PC-9 (cell line): ENCODE measurements at regions of chr2 and their contacts with region 1.

Region 1: DNA sequence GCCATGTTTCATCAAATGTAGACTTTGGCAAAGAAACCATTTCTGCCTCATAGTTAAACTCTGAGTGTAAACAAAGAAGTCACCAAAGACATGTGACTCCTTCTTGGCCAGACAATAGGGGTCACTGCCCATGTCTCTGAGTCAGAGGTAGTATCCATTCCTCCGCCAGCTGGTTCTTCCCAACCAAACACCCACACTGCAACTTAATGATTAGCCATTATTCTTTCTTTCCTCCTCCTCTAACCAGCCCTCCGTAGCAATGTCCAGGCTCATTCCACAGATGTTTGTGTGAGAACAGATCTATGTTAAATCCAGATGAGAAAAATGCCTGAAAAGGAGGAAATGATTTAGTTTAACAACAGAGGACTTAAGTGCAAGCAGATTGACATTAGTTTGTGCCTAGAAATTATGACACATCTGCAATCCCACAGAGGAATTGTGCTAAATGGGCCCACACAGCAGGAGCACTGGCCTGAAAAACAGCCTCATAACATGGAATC is 127.9 kb upstream of the SH3BP4 start:
- DNase-seq: peak; percentile 77 to 92
- H3K4me3 ChIP-seq: no peak overlapping the region
- H3K27ac ChIP-seq: peak overlapping the region; percentile 46; the same call in 1 of the 2 replicates
- H3K4me1 ChIP-seq: peaks cover 54% of the 10 kb centered on the region
- H3K27me3 ChIP-seq: no peaks in the 10 kb centered on the region
- CTCF ChIP-seq: no peak

Region 2: GRCh38 chr2:234550511-234551107 is 273.3 kb before region 1 on chr2:
- CTCF ChIA-PET with region 1: interaction called, 3 read pairs
- POLR2A ChIA-PET with region 1: no interaction called
- intact Hi-C with region 1: loop called (anchors 1 kb)
- DNase-seq: peak; percentile 74 to 85
- H3K4me3 ChIP-seq: no peak overlapping the region
- H3K27ac ChIP-seq: no peak overlapping the region
- H3K4me1 ChIP-seq: peaks cover 11% of the 10 kb centered on the region
- H3K27me3 ChIP-seq: no peaks in the 10 kb centered on the region
- CTCF ChIP-seq: peak; percentile 99

Region 3: GRCh38 chr2:234679741-234680687 is 143.9 kb before region 1 on chr2:
- CTCF ChIA-PET with region 1: no interaction called
- POLR2A ChIA-PET with region 1: interaction called, 5 read pairs
- intact Hi-C with region 1: loop called (anchors 5 kb)
- DNase-seq: peak; percentile 86 to 96
- H3K4me3 ChIP-seq: no peak overlapping the region
- H3K27ac ChIP-seq: peak overlapping the region; percentile 90
- H3K4me1 ChIP-seq: peaks cover 75% of the 10 kb centered on the region
- H3K27me3 ChIP-seq: no peaks in the 10 kb centered on the region
- CTCF ChIP-seq: no peak

Region 4: GRCh38 chr2:234725528-234726264 is 98.2 kb before region 1 on chr2:
- CTCF ChIA-PET with region 1: no interaction called
- POLR2A ChIA-PET with region 1: no interaction called
- intact Hi-C with region 1: no loop called
- DNase-seq: no peak
- H3K4me3 ChIP-seq: no peak overlapping the region
- H3K27ac ChIP-seq: peak overlapping the region; percentile 28
- H3K4me1 ChIP-seq: peaks cover 20% of the 10 kb centered on the region
- H3K27me3 ChIP-seq: no peaks in the 10 kb centered on the region
- CTCF ChIP-seq: no peak

Region 5: GRCh38 chr2:234792621-234793022 is 31.3 kb before region 1 on chr2:
- CTCF ChIA-PET with region 1: no interaction called
- POLR2A ChIA-PET with region 1: no interaction called
- intact Hi-C with region 1: no loop called
- DNase-seq: no peak
- H3K4me3 ChIP-seq: no peak overlapping the region
- H3K27ac ChIP-seq: no peak overlapping the region
- H3K4me1 ChIP-seq: no peaks in the 10 kb centered on the region
- H3K27me3 ChIP-seq: no peaks in the 10 kb centered on the region
- CTCF ChIP-seq: no peak

Region 6: DNA sequence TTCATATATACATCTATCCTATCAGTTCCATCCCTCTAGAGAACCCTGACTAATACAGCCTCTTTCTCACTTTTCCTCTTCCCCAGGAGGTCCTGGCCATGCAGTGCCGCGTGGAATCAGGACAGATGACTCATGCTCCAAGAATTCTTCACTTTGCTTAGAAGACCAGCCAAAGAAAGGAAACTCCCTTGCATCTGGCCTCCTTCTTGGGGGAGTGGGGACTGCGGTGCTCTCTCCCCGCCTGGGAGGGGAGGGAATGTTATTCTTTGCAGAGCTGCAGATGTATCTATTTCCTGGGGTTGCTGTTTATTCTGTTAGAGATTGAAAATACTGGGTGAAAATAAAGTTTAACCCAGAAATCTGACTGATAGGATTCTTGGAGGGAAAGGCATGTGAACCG is 16.4 kb after region 1 on chr2:
- CTCF ChIA-PET with region 1: interaction called, 5 read pairs
- POLR2A ChIA-PET with region 1: no interaction called
- intact Hi-C with region 1: loop called (anchors 1 kb)
- DNase-seq: peak; percentile 86 to 92
- H3K4me3 ChIP-seq: no peak overlapping the region
- H3K27ac ChIP-seq: peak overlapping the region; percentile 63
- H3K4me1 ChIP-seq: peaks cover 38% of the 10 kb centered on the region
- H3K27me3 ChIP-seq: no peaks in the 10 kb centered on the region
- CTCF ChIP-seq: no peak

Region 7: DNA sequence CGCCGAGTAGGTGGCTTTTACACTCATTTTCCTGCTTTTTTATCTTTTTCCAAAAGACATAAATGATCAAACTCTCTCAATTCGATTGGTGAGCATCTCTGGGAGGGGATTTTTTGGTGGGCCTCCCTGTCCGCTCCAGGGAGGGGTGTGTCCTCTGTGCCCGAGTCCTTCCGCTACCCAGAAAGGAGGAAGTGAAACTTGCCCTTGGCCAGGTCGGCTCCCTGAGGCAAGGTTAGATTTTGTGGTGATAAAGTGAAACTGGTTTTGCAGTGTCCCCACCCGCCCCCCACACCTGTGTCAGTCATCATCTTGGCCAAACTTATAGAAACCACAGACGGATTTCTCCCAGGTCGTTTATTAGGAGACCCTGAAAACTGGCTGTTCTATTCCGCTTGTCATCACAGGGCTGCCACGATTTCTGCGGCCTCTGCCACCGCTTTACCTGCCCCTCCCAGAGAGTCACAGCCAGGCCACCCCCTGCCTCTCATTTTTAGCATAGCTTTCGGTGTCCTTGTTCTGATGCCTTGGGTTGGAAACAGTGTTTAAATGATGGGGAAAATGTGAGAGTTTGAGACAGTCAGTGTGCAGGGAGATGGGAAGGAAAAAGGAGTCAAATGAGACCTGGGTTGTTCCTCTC is 221.5 kb after region 1 on chr2:
- CTCF ChIA-PET with region 1: no interaction called
- POLR2A ChIA-PET with region 1: no interaction called
- intact Hi-C with region 1: loop called (anchors 5 kb)
- DNase-seq: peak; percentile 75 to 94
- H3K4me3 ChIP-seq: peak overlapping the region; percentile 10; the same call in 1 of the 2 replicates
- H3K27ac ChIP-seq: peak overlapping the region; percentile 80
- H3K4me1 ChIP-seq: peaks cover 73% of the 10 kb centered on the region
- H3K27me3 ChIP-seq: no peaks in the 10 kb centered on the region
- CTCF ChIP-seq: no peak